MCF 10A (cell line): ENCODE measurements at regions of chr10 and their contacts with region 1.

Region 1: DNA sequence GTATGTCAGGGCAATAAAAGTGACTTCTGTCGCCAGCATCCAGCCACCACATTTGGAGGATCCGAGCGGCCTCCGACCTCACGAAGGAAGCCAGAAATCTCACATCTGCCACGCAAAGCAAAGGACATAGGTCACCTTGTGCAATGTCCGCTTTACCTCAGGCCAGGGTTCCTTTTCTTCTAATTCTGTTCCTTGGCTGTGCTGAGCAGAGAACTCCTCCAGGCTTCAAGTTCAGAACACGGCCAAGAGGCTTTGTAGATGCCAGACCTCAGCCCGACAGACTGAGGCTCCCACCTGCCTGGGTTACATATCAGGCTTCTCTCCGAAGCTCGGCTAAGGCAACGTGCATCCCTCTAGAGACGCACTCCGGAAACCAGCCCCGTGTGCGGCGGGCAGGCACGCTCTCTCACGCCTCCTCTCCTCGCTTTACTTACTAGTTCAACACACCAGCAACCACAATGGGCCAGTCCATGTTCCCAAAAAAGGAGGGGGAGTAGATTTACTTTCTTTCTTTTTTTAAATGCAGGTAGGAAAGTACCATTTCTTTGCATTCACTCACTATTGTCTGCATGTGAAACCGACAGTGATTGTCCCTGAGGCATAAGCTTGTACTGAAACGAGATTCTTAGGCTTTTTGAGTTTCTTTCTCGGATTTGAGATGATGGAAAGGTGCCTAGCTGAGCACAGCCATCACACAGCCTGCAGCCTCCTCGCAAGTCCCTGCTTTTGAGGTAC is 122.4 kb upstream of the AFAP1L2 start:
- DNase-seq: peak; percentile 93
- H3K4me3 Mint-ChIP-seq: peak overlapping the region; percentile 96
- H3K27ac Mint-ChIP-seq: peak overlapping the region; percentile 99
- H3K4me1 Mint-ChIP-seq: peaks cover 39% of the 10 kb centered on the region
- H3K27me3 Mint-ChIP-seq: no peaks in the 10 kb centered on the region
- CTCF ChIP-seq: no peak

Region 2: GRCh38 chr10:114479307-114479706 is 47.4 kb before region 1 on chr10:
- CTCF ChIA-PET with region 1: interaction called, 3 read pairs
- POLR2A ChIA-PET with region 1: interaction called, 11 read pairs
- intact Hi-C with region 1: no loop called
- DNase-seq: no peak
- H3K4me3 Mint-ChIP-seq: no peak overlapping the region
- H3K27ac Mint-ChIP-seq: no peak overlapping the region
- H3K4me1 Mint-ChIP-seq: no peaks in the 10 kb centered on the region
- H3K27me3 Mint-ChIP-seq: no peaks in the 10 kb centered on the region
- CTCF ChIP-seq: no peak

Region 3: GRCh38 chr10:114492351-114493037 is 34.2 kb before region 1 on chr10:
- CTCF ChIA-PET with region 1: interaction called, 8 read pairs
- POLR2A ChIA-PET with region 1: interaction called, 481 read pairs
- intact Hi-C with region 1: no loop called
- DNase-seq: no peak
- H3K4me3 Mint-ChIP-seq: no peak overlapping the region
- H3K27ac Mint-ChIP-seq: no peak overlapping the region
- H3K4me1 Mint-ChIP-seq: peaks cover 25% of the 10 kb centered on the region
- H3K27me3 Mint-ChIP-seq: no peaks in the 10 kb centered on the region
- CTCF ChIP-seq: no peak

Region 4: GRCh38 chr10:114541081-114541796 is 14.6 kb after region 1 on chr10:
- CTCF ChIA-PET with region 1: no interaction called
- POLR2A ChIA-PET with region 1: interaction called, 30 read pairs
- intact Hi-C with region 1: no loop called
- DNase-seq: peak; percentile 54
- H3K4me3 Mint-ChIP-seq: no peak overlapping the region
- H3K27ac Mint-ChIP-seq: peak overlapping the region; percentile 9
- H3K4me1 Mint-ChIP-seq: peaks cover 12% of the 10 kb centered on the region
- H3K27me3 Mint-ChIP-seq: no peaks in the 10 kb centered on the region
- CTCF ChIP-seq: no peak

Region 5: GRCh38 chr10:114714281-114714741 is 187.6 kb after region 1 on chr10:
- CTCF ChIA-PET with region 1: interaction called, 3 read pairs
- POLR2A ChIA-PET with region 1: interaction called, 14 read pairs
- intact Hi-C with region 1: no loop called
- DNase-seq: peak; percentile 97
- H3K4me3 Mint-ChIP-seq: peak overlapping the region; percentile 55
- H3K27ac Mint-ChIP-seq: peak overlapping the region; percentile 87
- H3K4me1 Mint-ChIP-seq: peaks cover 40% of the 10 kb centered on the region
- H3K27me3 Mint-ChIP-seq: no peaks in the 10 kb centered on the region
- CTCF ChIP-seq: no peak